ENCODE measurements at regions of chr5 and their contacts with region 1.

Region 1: DNA sequence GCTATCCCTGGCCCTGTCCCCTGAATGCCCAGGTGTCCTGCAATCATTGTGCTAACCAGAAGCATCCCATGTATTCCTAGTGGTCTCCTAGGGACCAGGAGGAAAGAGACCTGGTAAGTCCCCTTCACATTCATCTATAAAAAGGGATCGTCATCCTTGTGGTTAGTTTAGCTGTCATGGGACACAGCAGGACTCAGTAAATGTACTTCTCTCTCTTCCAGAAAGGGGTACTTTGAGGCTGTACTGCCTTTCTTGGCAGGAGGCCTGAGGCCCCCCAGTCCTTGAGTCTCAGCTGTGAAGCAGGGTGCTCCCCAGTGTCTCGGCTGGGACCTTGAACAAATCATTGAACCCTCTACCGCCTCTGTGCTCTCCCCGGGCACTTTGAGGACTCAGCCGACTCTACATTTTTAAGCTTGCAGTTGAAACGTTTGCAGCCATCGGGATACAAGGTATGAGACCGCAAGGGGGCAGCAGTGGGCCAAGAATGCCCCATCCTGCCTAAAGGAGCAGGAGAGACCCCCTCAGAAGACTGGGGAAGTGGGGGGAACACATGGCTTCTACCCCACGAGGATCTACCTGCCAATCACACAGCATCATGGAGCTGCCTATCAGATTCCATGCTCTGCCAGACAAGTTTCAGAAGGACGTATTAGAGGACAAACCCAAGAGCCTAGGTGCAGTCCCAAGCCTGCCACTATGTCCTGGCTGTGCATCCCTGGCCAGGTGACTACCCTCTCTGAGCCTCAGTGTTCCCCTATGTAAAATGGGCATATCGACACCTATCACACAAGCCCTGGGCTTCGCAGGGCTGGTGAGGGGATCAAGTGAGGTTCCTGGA is 2.4 kb upstream of the PHYKPL start:
- DNase-seq: peak; percentile 90
- ATAC-seq: peak; percentile 17
- H3K4me3 Mint-ChIP-seq: no peak overlapping the region
- H3K27ac Mint-ChIP-seq: peak overlapping the region; percentile 74
- H3K4me1 Mint-ChIP-seq: peaks cover 82% of the 10 kb centered on the region
- H3K27me3 Mint-ChIP-seq: no peaks in the 10 kb centered on the region

Region 2: DNA sequence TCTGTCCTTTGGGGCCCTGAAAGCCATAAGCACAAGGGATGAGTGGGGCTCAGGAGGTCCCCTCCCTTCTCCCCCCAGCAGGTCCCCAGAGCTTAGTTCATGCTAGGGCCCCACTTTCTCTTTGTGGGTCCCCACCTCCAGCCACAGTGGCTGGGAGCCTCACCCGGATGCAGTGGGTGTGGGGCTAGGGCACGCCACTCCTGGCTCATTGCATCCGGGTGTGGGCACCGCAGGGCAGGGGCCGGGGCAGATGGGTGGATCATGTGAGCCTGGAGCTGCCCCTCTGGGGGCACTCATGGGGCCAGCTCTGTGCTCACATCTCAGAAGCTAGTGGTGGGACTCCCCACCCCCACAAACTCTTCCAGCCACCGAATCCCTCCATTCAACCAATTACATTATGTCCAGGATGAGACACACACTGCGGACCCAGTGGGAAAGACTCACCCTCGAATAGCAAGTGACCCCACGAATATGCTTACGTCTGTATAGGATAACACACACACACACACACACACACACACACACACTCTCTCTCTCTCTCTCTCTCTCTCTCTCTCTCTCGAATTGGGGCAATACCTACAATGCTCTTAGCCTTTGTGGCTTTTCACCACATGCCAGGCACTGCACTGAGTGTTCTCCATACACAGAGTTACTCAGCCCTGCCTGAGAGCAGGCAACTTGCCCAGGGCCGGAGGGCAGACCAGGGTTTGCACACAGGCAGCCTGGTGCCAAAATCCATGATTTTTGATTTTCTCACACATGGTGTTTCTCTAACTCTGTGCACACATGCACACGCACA is 14.4 kb after region 1 on chr5:
- CTCF ChIA-PET with region 1: interaction called, 25 read pairs
- DNase-seq: peak; percentile 83
- ATAC-seq: peak; percentile 77
- H3K4me3 Mint-ChIP-seq: peak overlapping the region; percentile 36
- H3K27ac Mint-ChIP-seq: peak overlapping the region; percentile 85
- H3K4me1 Mint-ChIP-seq: peaks cover 38% of the 10 kb centered on the region
- H3K27me3 Mint-ChIP-seq: no peaks in the 10 kb centered on the region

Region 3: DNA sequence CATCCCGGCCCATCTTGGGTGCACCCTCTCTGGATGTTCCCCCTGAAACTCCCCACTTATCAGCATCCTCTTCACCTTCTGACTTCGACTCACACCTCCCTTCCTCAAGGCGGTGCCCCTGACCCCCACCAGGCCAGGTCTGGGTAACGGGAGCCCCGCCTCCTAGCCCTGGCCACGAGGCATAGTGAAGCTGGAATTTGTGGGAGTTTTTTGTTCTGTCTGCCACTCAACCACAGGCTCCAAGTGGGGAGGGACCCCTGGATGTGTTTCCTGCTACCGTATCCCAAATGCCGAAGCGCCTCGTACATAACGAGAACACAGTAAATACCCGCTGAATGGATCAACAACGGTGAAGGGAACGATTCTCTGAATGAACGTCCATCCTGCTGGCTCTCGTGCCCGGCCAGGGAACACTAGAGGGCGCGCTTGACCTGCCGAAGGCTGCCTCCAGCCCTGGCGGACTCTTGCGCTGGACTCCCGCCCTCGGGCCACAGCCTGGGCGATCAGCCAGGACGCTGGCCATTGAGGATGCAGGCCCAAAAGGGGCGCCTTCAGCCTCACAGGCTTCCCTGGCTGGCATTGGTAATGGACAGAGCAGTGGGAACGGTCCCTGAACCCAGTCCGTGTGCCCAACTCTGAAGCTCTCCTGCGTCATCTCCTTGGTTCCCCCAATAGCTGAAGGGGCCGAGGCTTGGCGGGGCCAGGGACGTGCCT is 44.9 kb after region 1 on chr5:
- CTCF ChIA-PET with region 1: interaction called, 44 read pairs
- DNase-seq: peak; percentile 73
- ATAC-seq: peak; percentile 86
- H3K4me3 Mint-ChIP-seq: no peak overlapping the region
- H3K27ac Mint-ChIP-seq: peak overlapping the region; percentile 54
- H3K4me1 Mint-ChIP-seq: peaks cover 4% of the 10 kb centered on the region
- H3K27me3 Mint-ChIP-seq: peaks cover 19% of the 10 kb centered on the region

Region 4: DNA sequence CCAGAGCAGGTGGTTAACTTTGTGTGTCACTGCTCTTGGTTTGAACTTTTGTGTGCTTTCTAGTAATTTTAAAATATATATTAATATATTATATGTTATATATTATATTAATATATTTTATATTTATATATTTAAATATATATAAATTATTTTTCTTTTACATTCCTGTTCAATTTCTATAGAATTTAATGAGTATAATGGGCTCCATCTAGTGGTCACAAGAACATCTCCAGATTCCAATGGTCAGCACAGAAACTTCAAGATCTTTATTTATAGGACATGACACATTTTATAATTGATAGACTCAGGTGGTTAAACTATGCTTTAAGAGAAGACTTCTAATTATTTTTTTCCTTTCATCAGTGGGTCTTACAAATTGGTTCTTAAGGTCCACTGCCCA is 316.1 kb after region 1 on chr5:
- CTCF ChIA-PET with region 1: interaction called, 10 read pairs
- DNase-seq: no peak
- ATAC-seq: no peak
- H3K4me3 Mint-ChIP-seq: no peak overlapping the region
- H3K27ac Mint-ChIP-seq: no peak overlapping the region
- H3K4me1 Mint-ChIP-seq: no peaks in the 10 kb centered on the region
- H3K27me3 Mint-ChIP-seq: peaks cover 12% of the 10 kb centered on the region